ENCODE measurements at regions of chr15 and their contacts with region 1.

Region 1: GRCh38 chr15:59410391-59410896 is 27.5 kb upstream of the FAM81A start:
- DNase-seq: no peak
- ATAC-seq: no peak
- H3K4me3 ChIP-seq: no peak overlapping the region
- H3K4me3 Mint-ChIP-seq: peak overlapping the region; percentile 45
- H3K27ac ChIP-seq: peak overlapping the region; percentile 74 to 85
- H3K27ac Mint-ChIP-seq: peak overlapping the region; percentile 78
- H3K4me1 ChIP-seq: peaks cover 83 to 87% of the 10 kb centered on the region in 2 donors
- H3K4me1 Mint-ChIP-seq: peaks cover 81% of the 10 kb centered on the region
- H3K27me3 ChIP-seq: no peaks in the 10 kb centered on the region
- H3K27me3 Mint-ChIP-seq: no peaks in the 10 kb centered on the region
- CTCF ChIP-seq: no peak

Region 2: GRCh38 chr15:58980351-58980939 is 430.0 kb before region 1 on chr15:
- CTCF ChIA-PET with region 1: interaction called, 4 read pairs
- POLR2A ChIA-PET with region 1: no interaction called
- intact Hi-C with region 1: loop called (anchors 5 kb)
- DNase-seq: peak; percentile 63
- ATAC-seq: no peak
- H3K4me3 ChIP-seq: no peak overlapping the region
- H3K4me3 Mint-ChIP-seq: peak overlapping the region; percentile 67
- H3K27ac ChIP-seq: peak overlapping the region; percentile 70 to 75
- H3K27ac Mint-ChIP-seq: peak overlapping the region; percentile 98
- H3K4me1 ChIP-seq: peaks cover 50 to 59% of the 10 kb centered on the region in 2 donors
- H3K4me1 Mint-ChIP-seq: peaks cover 49% of the 10 kb centered on the region
- H3K27me3 ChIP-seq: no peaks in the 10 kb centered on the region
- H3K27me3 Mint-ChIP-seq: no peaks in the 10 kb centered on the region
- CTCF ChIP-seq: peak; percentile 79

Region 3: GRCh38 chr15:59259137-59259943 is 151.1 kb before region 1 on chr15:
- CTCF ChIA-PET with region 1: no interaction called
- POLR2A ChIA-PET with region 1: no interaction called
- intact Hi-C with region 1: no loop called
- DNase-seq: no peak
- ATAC-seq: no peak
- H3K4me3 ChIP-seq: no peak overlapping the region
- H3K4me3 Mint-ChIP-seq: no peak overlapping the region
- H3K27ac ChIP-seq: no peak overlapping the region
- H3K27ac Mint-ChIP-seq: no peak overlapping the region
- H3K4me1 ChIP-seq: no peaks in the 10 kb centered on the region
- H3K4me1 Mint-ChIP-seq: peaks cover 16% of the 10 kb centered on the region
- H3K27me3 ChIP-seq: no peaks in the 10 kb centered on the region
- H3K27me3 Mint-ChIP-seq: no peaks in the 10 kb centered on the region
- CTCF ChIP-seq: no peak

Region 4: DNA sequence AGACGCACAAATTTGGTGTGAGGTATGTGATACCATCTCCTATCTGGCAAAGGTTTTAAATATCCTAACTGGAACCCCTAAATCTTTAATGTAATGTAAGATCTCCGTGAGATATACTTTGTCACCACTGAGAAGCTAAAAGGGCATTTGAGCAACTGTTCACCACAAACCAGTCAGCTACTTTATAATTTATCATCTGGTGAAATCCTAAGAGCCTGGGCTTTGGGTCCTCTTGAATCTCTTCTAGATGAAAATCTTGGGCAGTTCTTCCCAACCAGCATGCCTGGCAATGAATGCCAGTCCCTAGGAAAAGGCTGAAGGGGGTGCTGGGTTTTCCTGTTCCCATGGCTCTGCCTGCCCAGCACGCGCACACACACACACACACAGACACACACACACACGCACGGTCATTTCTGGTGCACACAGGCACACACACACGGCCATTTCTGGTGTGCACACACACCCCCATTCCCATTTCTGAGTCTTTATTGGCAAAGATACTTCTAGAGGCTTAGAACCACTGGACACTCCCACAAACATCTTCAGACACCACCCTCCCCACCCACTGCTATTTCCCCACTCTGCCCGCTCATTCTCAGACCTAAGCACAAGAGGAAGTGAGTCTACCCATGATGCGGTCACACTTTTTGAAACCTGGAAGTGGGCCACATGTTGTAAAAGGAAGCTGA is 110.4 kb before region 1 on chr15:
- CTCF ChIA-PET with region 1: interaction called, 6 read pairs
- POLR2A ChIA-PET with region 1: no interaction called
- intact Hi-C with region 1: loop called (anchors 1 kb)
- DNase-seq: peak; percentile 92
- ATAC-seq: peak; percentile 89
- H3K4me3 ChIP-seq: peak overlapping the region in 2 of 5 experiments; percentile 16 to 26
- H3K4me3 Mint-ChIP-seq: peak overlapping the region; percentile 64
- H3K27ac ChIP-seq: peak overlapping the region; percentile 62 to 78
- H3K27ac Mint-ChIP-seq: peak overlapping the region; percentile 79
- H3K4me1 ChIP-seq: peaks cover 70 to 88% of the 10 kb centered on the region in 2 donors
- H3K4me1 Mint-ChIP-seq: peaks cover 84% of the 10 kb centered on the region
- H3K27me3 ChIP-seq: no peaks in the 10 kb centered on the region
- H3K27me3 Mint-ChIP-seq: no peaks in the 10 kb centered on the region
- CTCF ChIP-seq: no peak

Region 5: DNA sequence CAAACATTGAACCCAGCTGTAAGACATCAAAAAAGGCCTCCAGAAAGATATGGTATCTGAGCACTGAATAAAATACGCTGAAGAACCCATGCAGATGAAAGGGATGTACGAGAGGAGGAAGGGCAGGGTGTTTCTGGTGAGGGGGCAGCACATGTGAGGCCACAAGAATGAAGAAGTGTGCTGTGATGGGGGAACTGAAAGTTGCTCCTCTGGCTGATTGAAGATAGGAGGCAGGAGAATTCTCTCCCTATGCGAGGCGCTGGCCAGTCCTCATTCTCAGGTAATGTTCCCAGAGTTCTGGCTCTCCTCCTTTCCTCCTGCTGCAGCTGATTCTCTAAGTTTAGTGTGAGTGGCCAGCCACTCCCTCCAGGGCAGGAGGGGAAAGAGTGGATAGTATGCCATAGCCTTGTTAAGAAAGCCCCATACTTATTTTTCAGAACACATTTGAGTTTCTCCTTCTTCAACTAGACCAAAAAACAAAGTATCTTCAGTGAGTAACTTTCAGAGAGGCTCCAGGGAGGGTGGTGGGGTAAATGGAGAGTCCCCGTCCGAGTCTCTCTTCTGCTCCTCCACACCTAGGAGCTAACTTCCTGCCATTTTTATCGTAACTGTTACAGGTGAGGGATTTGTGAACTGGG is 10.9 kb before region 1 on chr15:
- CTCF ChIA-PET with region 1: interaction called, 27 read pairs
- POLR2A ChIA-PET with region 1: interaction called, 7 read pairs
- intact Hi-C with region 1: loop called (anchors 1 kb)
- DNase-seq: peak; percentile 89
- ATAC-seq: peak; percentile 95
- H3K4me3 ChIP-seq: peak overlapping the region; percentile 21 to 48 (median 35)
- H3K4me3 Mint-ChIP-seq: peak overlapping the region; percentile 80
- H3K27ac ChIP-seq: peak overlapping the region; percentile 70 to 89
- H3K27ac Mint-ChIP-seq: peak overlapping the region; percentile 93
- H3K4me1 ChIP-seq: peaks cover 73 to 81% of the 10 kb centered on the region in 2 donors
- H3K4me1 Mint-ChIP-seq: peaks cover 78% of the 10 kb centered on the region
- H3K27me3 ChIP-seq: no peaks in the 10 kb centered on the region
- H3K27me3 Mint-ChIP-seq: no peaks in the 10 kb centered on the region
- CTCF ChIP-seq: no peak

Region 6: GRCh38 chr15:59444980-59445545 is 34.6 kb after region 1 on chr15:
- CTCF ChIA-PET with region 1: no interaction called
- POLR2A ChIA-PET with region 1: no interaction called
- intact Hi-C with region 1: no loop called
- DNase-seq: no peak
- ATAC-seq: no peak
- H3K4me3 ChIP-seq: no peak overlapping the region
- H3K4me3 Mint-ChIP-seq: no peak overlapping the region
- H3K27ac ChIP-seq: no peak overlapping the region
- H3K27ac Mint-ChIP-seq: no peak overlapping the region
- H3K4me1 ChIP-seq: peaks cover 14 to 22% of the 10 kb centered on the region in 2 donors
- H3K4me1 Mint-ChIP-seq: peaks cover 30% of the 10 kb centered on the region
- H3K27me3 ChIP-seq: no peaks in the 10 kb centered on the region
- H3K27me3 Mint-ChIP-seq: no peaks in the 10 kb centered on the region
- CTCF ChIP-seq: no peak

Region 7: GRCh38 chr15:59492389-59493377 is 82.2 kb after region 1 on chr15:
- CTCF ChIA-PET with region 1: interaction called, 26 read pairs
- POLR2A ChIA-PET with region 1: no interaction called
- intact Hi-C with region 1: loop called (anchors 2 kb)
- DNase-seq: peak; percentile 80
- ATAC-seq: peak; percentile 88
- H3K4me3 ChIP-seq: no peak overlapping the region
- H3K4me3 Mint-ChIP-seq: no peak overlapping the region
- H3K27ac ChIP-seq: no peak overlapping the region
- H3K27ac Mint-ChIP-seq: no peak overlapping the region
- H3K4me1 ChIP-seq: peaks cover 8% of the 10 kb centered on the region in 2 donors
- H3K4me1 Mint-ChIP-seq: peaks cover 9% of the 10 kb centered on the region
- H3K27me3 ChIP-seq: no peaks in the 10 kb centered on the region
- H3K27me3 Mint-ChIP-seq: no peaks in the 10 kb centered on the region
- CTCF ChIP-seq: peak; percentile 99

Measured in B cell (primary cell).